ENCODE measurements at regions of chrX and their contacts with region 1.

Region 1: GRCh38 chrX:142804085-142804484 is 221.6 kb upstream of the SPANXN4 start:
- DNase-seq: no peak
- H3K4me3 ChIP-seq: no peak overlapping the region
- H3K27ac ChIP-seq: no peak overlapping the region
- H3K4me1 ChIP-seq: no peaks in the 10 kb centered on the region
- H3K27me3 ChIP-seq: no peaks in the 10 kb centered on the region
- CTCF ChIP-seq: no peak
- EP300 ChIP-seq: no peak
- POLR2A ChIP-seq: no peak

Region 2: DNA sequence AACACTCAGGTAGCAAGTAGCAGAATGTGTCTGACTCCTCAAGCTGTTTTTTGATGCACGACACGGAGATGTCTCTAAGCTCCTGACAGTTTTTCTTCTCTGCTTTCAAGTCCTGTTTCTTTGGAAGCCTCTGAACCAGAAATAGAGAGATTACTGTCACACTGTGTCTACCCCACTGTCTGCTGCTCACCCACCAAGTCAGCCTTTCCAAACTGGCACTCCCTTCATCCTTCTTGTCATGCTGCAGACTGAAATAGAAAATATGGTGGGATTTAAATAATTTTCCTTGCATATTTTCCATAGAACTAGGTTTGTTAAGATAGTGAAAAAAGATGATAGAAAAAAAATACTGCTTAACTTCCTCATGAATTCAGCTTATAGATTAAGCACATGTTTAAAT is 119.1 kb after region 1 on chrX:
- intact Hi-C with region 1: no loop called
- DNase-seq: no peak
- H3K4me3 ChIP-seq: no peak overlapping the region
- H3K27ac ChIP-seq: no peak overlapping the region
- H3K4me1 ChIP-seq: no peaks in the 10 kb centered on the region
- H3K27me3 ChIP-seq: no peaks in the 10 kb centered on the region
- CTCF ChIP-seq: no peak
- EP300 ChIP-seq: no peak
- POLR2A ChIP-seq: no peak

Region 3: GRCh38 chrX:143461606-143462005 is 657.5 kb after region 1 on chrX:
- intact Hi-C with region 1: loop called in 1 of 4 experiments (anchors 10 kb)
- DNase-seq: no peak
- H3K4me3 ChIP-seq: no peak overlapping the region
- H3K27ac ChIP-seq: no peak overlapping the region
- H3K4me1 ChIP-seq: no peaks in the 10 kb centered on the region
- H3K27me3 ChIP-seq: no peaks in the 10 kb centered on the region
- CTCF ChIP-seq: no peak
- EP300 ChIP-seq: no peak
- POLR2A ChIP-seq: no peak